Activated CD4-positive, alpha-beta T cell treated with anti-CD3 and anti-CD28 coated beads, Interleukin-2, amount 10 ng/mL, durations not matched to agents 7 days and 5 days (primary cell): ENCODE measurements at regions of chr1 and their contacts with region 1.

Region 1: GRCh38 chr1:33455539-33456501 is 16.6 kb upstream of the ZSCAN20 start:
- DNase-seq: peak; percentile 70
- H3K4me3 Mint-ChIP-seq: no peak overlapping the region
- H3K27ac Mint-ChIP-seq: peak overlapping the region; percentile 75
- H3K4me1 Mint-ChIP-seq: peaks cover 4% of the 10 kb centered on the region
- H3K27me3 Mint-ChIP-seq: peaks cover 27% of the 10 kb centered on the region

Region 2: GRCh38 chr1:32933742-32934322 is 522.0 kb before region 1 on chr1:
- CTCF ChIA-PET with region 1: no interaction called
- POLR2A ChIA-PET with region 1: interaction called, 12 read pairs
- DNase-seq: no peak
- H3K4me3 Mint-ChIP-seq: no peak overlapping the region
- H3K27ac Mint-ChIP-seq: no peak overlapping the region
- H3K4me1 Mint-ChIP-seq: peaks cover 28% of the 10 kb centered on the region
- H3K27me3 Mint-ChIP-seq: no peaks in the 10 kb centered on the region